ENCODE measurements at regions of chr9 and their contacts with region 1.

Region 1: DNA sequence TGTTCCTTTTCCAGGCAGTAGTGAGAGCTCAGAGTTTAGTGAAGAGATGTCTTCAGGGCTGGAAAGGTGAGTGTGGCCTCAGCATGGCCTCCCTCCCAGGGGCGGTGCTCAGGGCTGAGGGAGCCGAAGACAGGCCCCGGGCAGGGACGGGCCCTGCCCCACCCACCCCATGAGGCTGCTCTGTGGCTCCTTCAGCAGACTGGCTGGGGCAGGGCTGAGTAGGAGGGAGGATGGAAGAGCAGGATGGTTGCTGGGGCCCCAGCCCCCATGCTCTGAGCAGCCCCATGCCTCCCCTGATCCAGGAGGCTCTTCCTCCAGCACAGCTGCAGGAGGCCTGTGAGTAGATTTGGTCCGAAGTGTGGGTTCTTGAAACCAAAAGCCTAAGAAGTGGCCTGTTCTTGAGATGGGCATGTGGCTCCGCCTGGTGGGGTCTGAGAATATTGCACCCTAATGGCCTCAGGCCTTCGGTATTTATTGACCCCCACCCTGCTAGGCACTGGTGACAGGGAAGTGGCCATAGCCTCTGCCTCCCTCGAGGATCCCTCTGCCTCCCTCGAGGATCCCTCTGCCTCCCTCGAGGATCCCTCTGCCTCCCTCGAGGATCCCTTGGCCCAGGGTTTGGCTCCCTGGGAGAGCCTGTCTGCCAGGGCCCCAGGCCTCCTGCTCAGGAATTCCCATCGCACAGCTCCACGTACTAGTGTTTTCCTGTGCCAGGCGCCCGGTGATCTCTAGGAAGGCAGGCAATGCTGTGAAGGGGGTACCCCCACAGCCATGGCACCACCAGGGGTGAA is 65.4 kb upstream of the GARNL3 start:
- DNase-seq: peak; percentile 89
- ATAC-seq: peak; percentile 89
- H3K4me3 Mint-ChIP-seq: no peak overlapping the region
- H3K27ac Mint-ChIP-seq: no peak overlapping the region
- H3K4me1 Mint-ChIP-seq: no peaks in the 10 kb centered on the region
- H3K27me3 Mint-ChIP-seq: no peaks in the 10 kb centered on the region
- CTCF ChIP-seq: peak; percentile 87

Region 2: GRCh38 chr9:126939821-126940221 is 259.4 kb before region 1 on chr9:
- CTCF ChIA-PET with region 1: interaction called, 81 read pairs
- POLR2A ChIA-PET with region 1: no interaction called
- intact Hi-C with region 1: loop called (anchors 1 kb)
- DNase-seq: no peak
- ATAC-seq: no peak
- H3K4me3 Mint-ChIP-seq: no peak overlapping the region
- H3K27ac Mint-ChIP-seq: no peak overlapping the region
- H3K4me1 Mint-ChIP-seq: peaks cover 4% of the 10 kb centered on the region
- H3K27me3 Mint-ChIP-seq: peaks cover 10% of the 10 kb centered on the region
- CTCF ChIP-seq: no peak

Region 3: DNA sequence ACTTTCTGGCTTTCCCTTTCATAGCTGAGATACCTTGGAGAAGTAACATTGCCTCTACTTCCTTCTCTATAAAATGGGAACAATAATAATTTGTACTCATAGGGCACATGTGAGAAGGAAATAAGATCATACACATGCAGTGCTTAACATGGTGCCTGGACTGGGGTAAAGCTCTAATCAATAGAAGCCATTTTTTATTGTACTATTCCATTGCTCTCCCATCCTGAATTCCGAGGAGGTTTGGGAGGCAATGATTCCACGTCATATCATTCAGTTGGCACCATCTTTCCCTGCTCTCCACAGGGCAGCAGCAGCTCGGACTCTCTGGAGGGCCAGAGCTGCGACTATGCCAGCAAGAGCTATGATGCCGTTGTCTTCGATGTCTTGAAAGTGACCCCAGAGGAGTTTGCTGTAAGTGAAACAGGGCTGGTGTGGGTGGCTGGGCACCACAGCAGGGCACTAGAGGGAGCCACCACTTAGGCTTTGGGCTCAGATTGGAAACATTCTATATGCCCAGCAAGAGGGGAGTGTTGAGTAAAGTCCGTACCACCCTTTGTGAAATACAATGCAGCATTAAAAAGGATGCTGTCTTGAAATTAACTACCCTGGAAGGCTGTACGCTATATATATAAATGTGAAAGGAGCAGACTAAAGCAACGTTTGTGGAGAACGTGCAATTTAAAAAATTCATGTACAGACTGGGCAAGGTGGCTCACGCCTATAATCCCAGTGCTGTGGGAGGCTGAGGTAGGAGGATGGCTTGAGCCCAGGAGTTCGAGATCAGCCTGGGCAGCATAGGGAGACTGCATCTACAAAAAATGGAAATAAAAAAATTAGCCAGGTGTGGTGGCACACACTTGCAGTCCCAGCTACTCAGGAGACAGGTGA is 233.4 kb before region 1 on chr9:
- CTCF ChIA-PET with region 1: interaction called, 17 read pairs
- POLR2A ChIA-PET with region 1: interaction called, 3 read pairs
- intact Hi-C with region 1: no loop called
- DNase-seq: peak; percentile 71
- ATAC-seq: peak; percentile 77
- H3K4me3 Mint-ChIP-seq: no peak overlapping the region
- H3K27ac Mint-ChIP-seq: no peak overlapping the region
- H3K4me1 Mint-ChIP-seq: peaks cover 2% of the 10 kb centered on the region
- H3K27me3 Mint-ChIP-seq: peaks cover 11% of the 10 kb centered on the region
- CTCF ChIP-seq: peak; percentile 71

Region 4: GRCh38 chr9:127796225-127796813 is 597.1 kb after region 1 on chr9:
- CTCF ChIA-PET with region 1: no interaction called
- POLR2A ChIA-PET with region 1: no interaction called
- intact Hi-C with region 1: no loop called
- DNase-seq: no peak
- ATAC-seq: peak; percentile 45
- H3K4me3 Mint-ChIP-seq: no peak overlapping the region
- H3K27ac Mint-ChIP-seq: peak overlapping the region; percentile 81
- H3K4me1 Mint-ChIP-seq: peaks cover 24% of the 10 kb centered on the region
- H3K27me3 Mint-ChIP-seq: no peaks in the 10 kb centered on the region
- CTCF ChIP-seq: no peak